Thyroid gland (tissue), 4 donors: ENCODE measurements at regions of chr1 and their contacts with region 1.

Region 1: DNA sequence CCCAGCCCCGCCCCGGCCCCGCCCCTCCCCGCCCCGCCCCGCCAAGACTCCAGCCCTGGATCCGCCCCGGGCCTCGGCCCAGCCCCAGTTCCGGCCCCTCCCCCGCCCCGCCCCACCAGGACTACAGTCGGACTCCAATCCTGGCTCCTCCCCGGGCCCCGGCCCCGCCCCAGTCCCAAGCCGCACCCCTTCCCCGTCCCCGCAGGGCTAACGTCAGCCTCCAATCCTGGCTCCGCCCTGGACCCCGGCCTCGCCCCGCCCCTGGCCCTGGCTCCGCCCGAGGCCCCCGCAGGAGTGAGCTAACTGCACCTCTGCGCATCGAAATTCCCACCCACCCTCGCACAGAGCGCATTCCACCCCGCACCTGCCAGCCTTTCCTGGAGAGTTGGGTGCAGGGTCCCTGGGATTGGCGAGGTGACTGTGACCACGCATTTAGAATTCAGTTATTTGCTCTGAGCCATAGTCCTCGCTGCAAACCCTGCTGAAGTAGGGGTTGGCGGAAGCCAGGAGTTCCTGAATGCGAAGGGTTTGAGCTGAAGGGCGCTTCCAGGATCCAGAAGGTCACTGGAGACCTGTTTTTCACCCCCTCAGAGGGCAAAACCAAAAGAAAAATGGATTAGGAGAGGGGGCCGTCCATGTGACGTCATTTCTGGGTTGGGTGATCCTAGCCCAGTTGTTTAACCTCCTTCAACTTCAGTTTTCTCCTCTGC is 588 bp upstream of the IGSF8 start:
- DNase-seq: peak; percentile 97 to 98
- H3K4me3 ChIP-seq: peak overlapping the region in 2 of 3 donors; percentile 5 to 35
- H3K27ac ChIP-seq: peak overlapping the region; percentile 93 to 97 (median 96)
- H3K4me1 ChIP-seq: peaks cover 31 to 56% of the 10 kb centered on the region in 2 donors
- H3K27me3 ChIP-seq: no peaks in the 10 kb centered on the region
- CTCF ChIP-seq: peak in 1 of 6 experiments; percentile 7
- POLR2A ChIP-seq: peak; percentile 25 to 83

Region 2: GRCh38 chr1:159924981-159925712 is 173.9 kb before region 1 on chr1 and contains the start of gene TAGLN2:
- intact Hi-C with region 1: loop called (anchors 10 kb)
- DNase-seq: peak; percentile 88 to 91
- H3K4me3 ChIP-seq: peak within 1 kb of the TSS; percentile 71 to 91 (median 74)
- H3K27ac ChIP-seq: peak within 1 kb of the TSS; percentile 93 to 98 (median 96)
- H3K4me1 ChIP-seq: peaks cover 34 to 41% of the 10 kb centered on the region in 2 donors
- H3K27me3 ChIP-seq: no peaks in the 10 kb centered on the region
- CTCF ChIP-seq: no peak
- POLR2A ChIP-seq: peak; percentile 55 to 96
- total RNA-seq, gene TAGLN2: 104 to 170 (median 151) TPM

Region 3: GRCh38 chr1:160144921-160145320 is 45.9 kb after region 1 on chr1:
- intact Hi-C with region 1: no loop called
- DNase-seq: peak in 1 of 2 donors; percentile 12
- H3K4me3 ChIP-seq: no peak overlapping the region
- H3K27ac ChIP-seq: no peak overlapping the region
- H3K4me1 ChIP-seq: no peaks in the 10 kb centered on the region
- H3K27me3 ChIP-seq: no peaks in the 10 kb centered on the region
- CTCF ChIP-seq: no peak
- POLR2A ChIP-seq: no peak

Region 4: GRCh38 chr1:160193091-160193819 is 94.2 kb after region 1 on chr1:
- intact Hi-C with region 1: loop called (anchors 5 kb)
- DNase-seq: peak; percentile 84 to 90
- H3K4me3 ChIP-seq: no peak overlapping the region
- H3K27ac ChIP-seq: no peak overlapping the region
- H3K4me1 ChIP-seq: peaks cover 0 to 4% of the 10 kb centered on the region in 2 donors
- H3K27me3 ChIP-seq: no peaks in the 10 kb centered on the region
- CTCF ChIP-seq: peak; percentile 90 to 98 (median 96)
- POLR2A ChIP-seq: no peak

Region 5: DNA sequence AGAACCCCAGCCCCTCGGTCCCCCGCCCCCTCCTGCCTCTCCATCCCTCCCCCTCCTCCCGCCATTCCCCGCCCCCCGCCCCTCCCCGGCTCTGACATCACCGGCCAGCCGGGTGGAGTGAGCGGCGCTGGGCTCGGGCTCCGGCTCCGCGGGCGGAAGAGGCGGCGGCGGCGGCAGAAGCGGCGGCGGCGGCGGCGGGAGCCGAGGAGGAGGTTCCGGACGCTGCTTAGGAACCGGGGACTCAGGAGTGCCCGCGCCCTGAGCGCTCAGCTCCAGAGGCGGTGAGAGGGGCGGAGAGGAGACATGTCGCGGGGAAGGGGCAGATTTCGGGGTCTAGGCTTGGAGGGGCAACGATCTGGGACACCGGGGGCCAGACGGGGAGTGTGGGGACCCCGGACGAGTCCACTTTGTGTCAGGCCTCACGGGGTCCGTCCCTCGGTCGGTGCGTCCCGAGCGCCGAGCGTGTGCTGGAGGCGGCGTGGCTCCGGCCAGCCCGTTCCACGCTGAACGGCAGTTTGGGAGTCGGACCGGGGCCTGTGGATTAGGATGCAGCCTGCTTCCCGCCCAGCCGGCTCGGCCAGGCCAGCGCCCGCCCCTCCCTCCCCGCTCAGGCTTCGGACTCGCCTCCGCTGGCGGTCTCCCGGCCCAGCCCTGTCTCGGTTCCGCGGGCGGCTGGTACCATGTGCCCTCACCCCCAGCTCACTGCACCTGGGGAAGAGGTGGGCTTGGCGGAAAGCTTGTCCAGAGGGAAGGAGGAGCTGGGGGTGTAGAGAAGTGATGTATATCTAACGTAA is 106.4 kb after region 1 on chr1 and contains the start of gene PEA15:
- intact Hi-C with region 1: no loop called
- DNase-seq: peak; percentile 74
- H3K4me3 ChIP-seq: peak within 1 kb of the TSS; percentile 45 to 69 (median 60)
- H3K27ac ChIP-seq: peak within 1 kb of the TSS; percentile 74 to 87 (median 86)
- H3K4me1 ChIP-seq: peaks cover 24 to 49% of the 10 kb centered on the region in 2 donors
- H3K27me3 ChIP-seq: no peaks in the 10 kb centered on the region
- CTCF ChIP-seq: no peak
- POLR2A ChIP-seq: peak in 1 of 2 donors; percentile 78
- total RNA-seq, gene PEA15: 47.9 to 68.5 (median 50.2) TPM

Region 6: DNA sequence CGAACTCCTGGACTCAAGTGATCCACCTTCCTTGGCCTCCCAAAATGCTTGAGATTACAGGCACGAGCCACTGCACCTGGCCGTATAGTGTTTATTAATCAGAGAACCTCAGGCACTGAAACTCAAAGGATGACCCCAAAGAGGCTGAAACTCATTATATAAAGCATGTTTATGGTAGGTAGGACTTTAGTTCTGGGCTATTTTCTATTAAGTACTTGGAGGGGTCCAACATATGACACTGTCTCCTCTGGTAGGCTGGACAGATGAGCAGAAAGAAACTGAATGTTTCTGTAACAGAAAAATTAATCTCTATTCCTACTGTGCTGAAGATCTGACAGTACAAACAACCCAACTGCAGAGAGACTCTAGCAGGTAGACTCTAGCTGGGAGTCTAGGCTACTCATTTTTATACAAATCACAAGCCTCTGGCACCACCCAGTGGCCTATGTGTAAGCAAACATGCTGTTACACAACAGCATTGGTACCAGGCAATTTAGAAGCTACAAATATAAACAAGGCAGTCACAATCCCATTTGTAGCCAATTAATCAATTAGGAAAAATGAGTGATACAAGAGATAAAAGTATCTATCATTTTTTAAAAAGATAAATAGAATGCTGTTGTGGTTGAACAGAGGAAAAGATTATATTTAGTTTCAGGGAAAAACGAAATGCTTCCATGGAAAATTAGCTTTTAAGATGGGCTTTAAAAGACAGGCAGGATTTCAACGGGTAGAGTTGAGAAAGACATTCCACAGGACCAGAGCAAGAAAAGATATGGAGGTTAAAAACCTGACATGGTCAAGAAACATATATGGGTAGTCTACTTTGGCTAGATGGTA is 152.9 kb after region 1 on chr1:
- intact Hi-C with region 1: loop called (anchors 10 kb)
- DNase-seq: peak; percentile 79 to 87
- H3K4me3 ChIP-seq: no peak overlapping the region
- H3K27ac ChIP-seq: peak overlapping the region; percentile 48 to 70 (median 58)
- H3K4me1 ChIP-seq: peaks cover 26 to 40% of the 10 kb centered on the region in 2 donors
- H3K27me3 ChIP-seq: no peaks in the 10 kb centered on the region
- CTCF ChIP-seq: peak; percentile 18 to 94 (median 80)
- POLR2A ChIP-seq: no peak

Region 7: GRCh38 chr1:160284782-160285344 is 185.9 kb after region 1 on chr1 and contains the start of gene PEX19:
- intact Hi-C with region 1: loop called (anchors 10 kb)
- DNase-seq: peak; percentile 94 to 95
- H3K4me3 ChIP-seq: peak within 1 kb of the TSS; percentile 26 to 96 (median 84)
- H3K27ac ChIP-seq: peak within 1 kb of the TSS; percentile 11 to 91 (median 90)
- H3K4me1 ChIP-seq: peaks cover 11 to 19% of the 10 kb centered on the region in 2 donors
- H3K27me3 ChIP-seq: no peaks in the 10 kb centered on the region
- CTCF ChIP-seq: no peak
- POLR2A ChIP-seq: peak in 1 of 2 donors; percentile 91
- total RNA-seq, gene PEX19: 65.2 to 120 (median 85.3) TPM